ENCODE measurements at regions of chr9 and their contacts with region 1.

Region 1: DNA sequence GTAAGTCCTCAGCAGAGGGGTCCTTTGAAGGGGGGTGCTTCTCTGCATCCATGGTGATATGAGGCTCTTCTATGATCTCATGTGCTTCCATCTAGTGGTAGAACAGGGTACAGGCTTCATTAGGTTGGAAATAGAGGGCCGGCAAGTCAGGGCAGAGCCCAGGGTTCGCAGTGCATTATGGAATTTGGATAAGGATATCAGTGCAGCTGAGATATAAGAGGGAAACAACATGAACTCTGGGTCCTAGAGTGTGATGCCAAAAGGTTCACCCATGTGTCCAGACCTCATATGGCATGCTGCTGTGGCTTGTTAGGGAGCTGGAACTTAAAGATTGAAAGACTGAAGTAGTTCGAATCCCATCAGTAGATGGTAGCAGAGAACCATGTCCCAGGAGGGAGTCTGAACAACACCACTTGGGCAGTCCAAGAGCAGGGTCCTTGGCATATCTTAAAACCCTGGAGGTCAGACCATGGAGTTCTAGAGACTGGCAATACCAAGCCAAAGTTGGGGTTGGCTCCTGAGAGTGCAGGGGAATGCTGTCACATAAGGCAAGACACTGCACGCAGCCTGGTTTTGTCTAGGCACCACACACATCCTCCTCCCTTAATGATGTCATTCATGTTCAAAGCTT is 2.3 kb downstream of the FAM221B start:
- DNase-seq: peak in 2 of 5 donors; percentile 45 to 58
- H3K4me3 ChIP-seq: no peak overlapping the region
- H3K4me3 Mint-ChIP-seq: peak overlapping the region in 4 of 7 donors; percentile 55 to 69 (median 65)
- H3K27ac ChIP-seq: no peak overlapping the region
- H3K27ac Mint-ChIP-seq: peak overlapping the region in 5 of 8 donors; percentile 21 to 85 (median 28)
- H3K4me1 ChIP-seq: peaks cover 14% of the 10 kb centered on the region
- H3K4me1 Mint-ChIP-seq: peaks cover 22 to 31% (median 24%) of the 10 kb centered on the region in 3 donors
- H3K27me3 ChIP-seq: no peaks in the 10 kb centered on the region
- H3K27me3 Mint-ChIP-seq: no peaks in the 10 kb centered on the region

Region 2: GRCh38 chr9:35814841-35815543 is 11.2 kb before region 1 on chr9 and contains the start of gene HINT2:
- CTCF ChIA-PET with region 1: interaction called, 16 read pairs
- POLR2A ChIA-PET with region 1: interaction called, 3 read pairs
- DNase-seq: peak; percentile 96 to 99 (median 96)
- H3K4me3 ChIP-seq: peak within 1 kb of the TSS; percentile 91
- H3K4me3 Mint-ChIP-seq: peak within 1 kb of the TSS; percentile 91 to 98 (median 96)
- H3K27ac ChIP-seq: peak within 1 kb of the TSS; percentile 65
- H3K27ac Mint-ChIP-seq: peak within 1 kb of the TSS; percentile 91 to 97 (median 96)
- H3K4me1 ChIP-seq: peaks cover 29% of the 10 kb centered on the region
- H3K4me1 Mint-ChIP-seq: peaks cover 36 to 49% (median 43%) of the 10 kb centered on the region in 3 donors
- H3K27me3 ChIP-seq: no peaks in the 10 kb centered on the region
- H3K27me3 Mint-ChIP-seq: peaks cover 0 to 12% of the 10 kb centered on the region in 2 donors
- total RNA-seq, gene HINT2: 65.1 to 71.7 TPM

Region 3: GRCh38 chr9:35859310-35859989 is 33.3 kb after region 1 on chr9:
- CTCF ChIA-PET with region 1: no interaction called
- POLR2A ChIA-PET with region 1: no interaction called
- DNase-seq: no peak
- H3K4me3 ChIP-seq: no peak overlapping the region
- H3K4me3 Mint-ChIP-seq: no peak overlapping the region
- H3K27ac ChIP-seq: no peak overlapping the region
- H3K27ac Mint-ChIP-seq: peak overlapping the region in 1 of 8 donors; percentile 64
- H3K4me1 ChIP-seq: no peaks in the 10 kb centered on the region
- H3K4me1 Mint-ChIP-seq: peaks cover 0 to 6% (median 5%) of the 10 kb centered on the region in 3 donors
- H3K27me3 ChIP-seq: peaks cover 3% of the 10 kb centered on the region
- H3K27me3 Mint-ChIP-seq: peaks cover 12 to 31% of the 10 kb centered on the region in 2 donors

Region 4: DNA sequence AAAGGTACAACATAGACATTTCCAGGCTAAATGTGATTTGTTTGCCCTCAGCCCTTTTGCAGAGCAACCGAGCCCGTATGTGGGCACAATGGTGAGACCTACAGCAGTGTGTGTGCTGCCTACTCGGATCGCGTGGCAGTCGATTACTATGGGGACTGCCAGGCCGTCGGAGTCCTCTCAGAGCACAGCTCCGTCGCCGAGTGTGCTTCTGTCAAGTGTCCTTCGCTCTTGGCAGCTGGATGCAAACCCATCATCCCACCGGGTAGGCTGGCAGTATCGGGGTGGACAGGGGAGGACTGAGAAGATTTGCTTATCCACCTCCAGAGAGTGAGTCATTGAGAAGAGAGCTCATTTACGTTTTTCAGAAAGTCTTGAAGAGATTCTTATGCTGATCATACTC is 292.5 kb after region 1 on chr9:
- CTCF ChIA-PET with region 1: no interaction called
- POLR2A ChIA-PET with region 1: no interaction called
- DNase-seq: no peak
- H3K4me3 ChIP-seq: no peak overlapping the region
- H3K4me3 Mint-ChIP-seq: no peak overlapping the region
- H3K27ac ChIP-seq: no peak overlapping the region
- H3K27ac Mint-ChIP-seq: no peak overlapping the region
- H3K4me1 ChIP-seq: no peaks in the 10 kb centered on the region
- H3K4me1 Mint-ChIP-seq: no peaks in the 10 kb centered on the region
- H3K27me3 ChIP-seq: no peaks in the 10 kb centered on the region
- H3K27me3 Mint-ChIP-seq: no peaks in the 10 kb centered on the region

Measured in CD8-positive, alpha-beta memory T cell (primary cell).